ENCODE measurements at regions of chr3 and their contacts with region 1.

Region 1: DNA sequence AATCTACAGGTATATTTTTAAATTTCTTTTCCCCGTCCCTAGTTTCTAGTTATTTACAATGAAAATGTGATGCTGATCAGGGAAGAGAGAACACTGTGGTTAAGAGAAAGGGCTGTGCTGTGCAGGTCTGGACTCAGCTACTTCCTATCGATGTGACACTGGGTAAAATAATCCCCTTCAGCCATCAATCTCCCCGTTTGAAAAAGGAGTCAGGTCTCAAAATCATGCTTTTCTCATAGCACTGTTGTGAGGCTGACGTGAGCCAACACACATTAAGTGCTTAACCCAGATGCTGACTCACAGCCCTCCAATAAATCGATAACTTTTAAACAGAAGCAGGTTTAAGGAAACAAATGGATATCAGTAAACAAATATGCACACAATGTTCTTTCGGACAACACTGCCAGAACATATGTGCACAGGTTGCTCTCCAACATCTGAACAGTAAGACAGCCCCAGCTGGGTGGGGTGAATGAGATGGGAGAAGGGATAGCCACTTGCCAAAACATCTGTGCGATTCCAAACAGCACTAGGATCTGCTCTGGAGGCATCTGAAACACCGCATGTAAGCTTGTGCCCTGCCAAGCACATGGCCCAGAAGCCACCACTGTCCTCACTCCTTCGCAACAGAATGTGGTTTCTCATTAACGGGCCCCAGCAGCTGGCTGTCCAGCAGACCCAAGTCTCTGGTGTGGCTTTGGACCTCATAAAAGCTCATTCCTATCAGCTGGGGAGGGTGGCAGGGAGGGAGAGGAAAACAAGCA is 143.2 kb upstream of the PRICKLE2 start:
- DNase-seq: no peak
- H3K4me3 ChIP-seq: no peak overlapping the region
- H3K27ac ChIP-seq: no peak overlapping the region
- H3K4me1 ChIP-seq: peaks cover 0 to 3% (median 0%) of the 10 kb centered on the region in 4 experiments; a peak in 1 of 7 replicates
- H3K27me3 ChIP-seq: no peaks in the 10 kb centered on the region
- CTCF ChIP-seq: no peak
- EP300 ChIP-seq: no peak
- POLR2A ChIP-seq: no peak
- RAD21 ChIP-seq: no peak

Region 2: GRCh38 chr3:64382153-64382552 is 13.7 kb after region 1 on chr3:
- CTCF ChIA-PET with region 1: interaction called, 27 read pairs
- POLR2A ChIA-PET with region 1: no interaction called
- DNase-seq: no peak
- H3K4me3 ChIP-seq: no peak overlapping the region
- H3K27ac ChIP-seq: no peak overlapping the region
- H3K4me1 ChIP-seq: no peaks in the 10 kb centered on the region
- H3K27me3 ChIP-seq: no peaks in the 10 kb centered on the region
- CTCF ChIP-seq: no peak
- EP300 ChIP-seq: no peak
- POLR2A ChIP-seq: no peak
- RAD21 ChIP-seq: no peak

Region 3: GRCh38 chr3:64759811-64760210 is 391.4 kb after region 1 on chr3:
- CTCF ChIA-PET with region 1: no interaction called
- POLR2A ChIA-PET with region 1: no interaction called
- DNase-seq: no peak
- H3K4me3 ChIP-seq: no peak overlapping the region
- H3K27ac ChIP-seq: no peak overlapping the region
- H3K4me1 ChIP-seq: no peaks in the 10 kb centered on the region
- H3K27me3 ChIP-seq: no peaks in the 10 kb centered on the region; a peak in 1 of 7 replicates
- CTCF ChIP-seq: no peak
- EP300 ChIP-seq: no peak
- POLR2A ChIP-seq: no peak
- RAD21 ChIP-seq: no peak